ENCODE measurements at regions of chr15 and their contacts with region 1.

Region 1: DNA sequence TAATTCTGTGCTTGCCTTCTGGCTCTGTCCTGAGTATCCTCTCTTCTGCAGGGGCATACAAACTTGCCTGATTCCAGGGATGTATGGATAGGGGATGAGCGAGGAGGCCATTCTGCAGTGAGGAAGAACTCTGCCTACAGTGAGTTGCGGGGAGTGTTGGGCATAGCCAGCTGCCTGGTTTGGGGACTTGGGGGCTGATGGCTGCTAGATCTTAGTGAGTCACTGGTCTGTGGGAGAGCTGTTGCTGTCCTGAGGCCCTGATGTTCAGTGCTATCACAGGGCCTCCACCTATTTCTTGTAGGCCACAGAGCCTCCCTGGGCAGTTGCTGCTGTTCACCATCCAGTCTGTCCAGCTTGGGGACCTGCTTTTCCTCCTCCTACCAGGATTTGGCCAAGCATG is 20.3 kb downstream of the CDAN1 start:
- DNase-seq: peak; percentile 8
- CTCF ChIP-seq: no peak

Region 2: GRCh38 chr15:42704492-42704926 is 12.1 kb before region 1 on chr15:
- CTCF ChIA-PET with region 1: interaction called, 16 read pairs
- POLR2A ChIA-PET with region 1: no interaction called
- DNase-seq: peak; percentile 75
- CTCF ChIP-seq: peak; percentile 60

Measured in GM10248 (cell line).